ENCODE measurements at regions of chr6 and their contacts with region 1.

Region 1: DNA sequence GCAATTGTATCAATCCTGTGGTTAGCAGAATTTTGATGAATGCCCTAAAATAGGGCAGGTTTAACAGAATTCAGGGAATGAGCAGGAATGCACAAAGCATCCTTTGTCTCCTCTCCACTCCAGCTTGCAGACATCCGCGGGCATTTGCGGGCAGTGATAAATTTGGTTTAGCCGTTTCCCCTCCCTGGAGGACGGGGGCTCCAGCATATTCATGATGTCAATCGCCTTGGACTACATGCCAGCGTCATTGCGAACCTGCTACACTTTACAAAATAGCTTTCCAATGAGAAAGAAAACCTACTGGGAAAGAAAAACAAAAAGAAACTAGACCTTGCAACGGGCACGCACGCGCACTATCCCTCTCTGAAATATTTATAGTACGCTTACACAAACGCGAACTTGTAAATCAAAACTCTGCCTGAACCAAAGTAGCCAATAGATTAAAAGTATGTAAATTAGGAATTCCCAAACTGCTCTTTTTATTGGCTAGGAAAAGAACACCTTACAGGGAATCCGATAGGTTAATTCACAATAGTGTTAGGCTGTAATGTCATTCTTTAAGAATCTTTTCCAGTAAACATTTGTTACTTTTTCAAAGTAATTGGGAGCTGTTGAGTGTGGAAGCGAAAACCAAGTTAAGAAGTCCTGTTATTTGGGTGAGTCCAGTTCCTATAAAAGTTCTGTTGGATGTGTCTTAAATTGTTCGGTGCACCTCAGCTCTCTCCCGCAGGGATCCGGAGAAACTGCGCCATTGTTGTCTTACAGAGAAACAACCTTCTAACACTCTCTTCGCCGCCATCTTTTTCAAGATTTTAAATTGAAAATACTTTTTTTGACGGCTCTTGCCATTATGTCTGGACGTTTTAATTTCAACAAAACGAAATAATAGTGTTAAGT is 136.7 kb downstream of the HFE start:
- DNase-seq: no peak
- ATAC-seq: peak; percentile 69
- H3K4me3 Mint-ChIP-seq: no peak overlapping the region
- H3K27ac Mint-ChIP-seq: no peak overlapping the region
- H3K4me1 Mint-ChIP-seq: peaks cover 42% of the 10 kb centered on the region
- H3K27me3 Mint-ChIP-seq: no peaks in the 10 kb centered on the region
- CTCF ChIP-seq: no peak

Region 2: DNA sequence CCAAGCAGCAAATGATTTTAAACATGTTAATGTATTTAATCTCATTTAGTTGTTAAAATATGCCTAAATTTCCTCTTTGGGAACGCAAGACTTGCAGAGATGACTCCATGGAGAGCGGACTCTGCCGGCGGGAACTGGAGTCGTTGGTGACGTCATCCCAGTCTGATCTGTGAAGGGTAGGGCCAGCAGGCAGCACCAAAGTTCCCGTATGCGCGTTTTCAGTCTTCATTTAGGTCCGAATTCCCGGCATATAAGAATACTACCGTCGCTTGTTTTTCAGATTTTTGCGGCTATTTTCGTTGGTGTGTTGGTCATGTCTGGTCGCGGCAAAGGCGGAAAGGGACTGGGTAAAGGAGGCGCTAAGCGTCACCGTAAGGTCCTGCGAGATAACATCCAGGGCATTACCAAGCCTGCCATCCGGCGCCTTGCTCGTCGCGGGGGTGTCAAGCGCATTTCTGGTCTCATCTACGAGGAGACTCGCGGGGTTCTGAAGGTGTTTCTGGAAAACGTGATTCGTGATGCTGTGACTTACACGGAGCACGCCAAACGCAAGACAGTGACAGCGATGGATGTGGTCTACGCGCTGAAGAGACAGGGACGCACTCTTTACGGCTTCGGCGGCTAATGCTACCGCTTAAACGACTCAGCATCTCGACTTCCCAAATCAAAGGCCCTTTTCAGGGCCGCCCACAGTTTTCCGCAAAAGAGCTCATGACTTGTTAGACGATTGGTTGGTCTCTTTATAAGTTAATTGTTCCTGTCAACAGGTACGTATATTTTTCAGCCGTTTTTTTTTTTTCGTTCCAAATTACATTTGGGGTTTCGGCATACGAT is 19.3 kb before region 1 on chr6:
- CTCF ChIA-PET with region 1: no interaction called
- POLR2A ChIA-PET with region 1: interaction called, 130 read pairs
- DNase-seq: peak; percentile 90
- ATAC-seq: peak; percentile 58
- H3K4me3 Mint-ChIP-seq: no peak overlapping the region
- H3K27ac Mint-ChIP-seq: no peak overlapping the region
- H3K4me1 Mint-ChIP-seq: peaks cover 22% of the 10 kb centered on the region
- H3K27me3 Mint-ChIP-seq: no peaks in the 10 kb centered on the region
- CTCF ChIP-seq: no peak

Region 3: GRCh38 chr6:26240154-26241032 is 16.5 kb after region 1 on chr6:
- CTCF ChIA-PET with region 1: no interaction called
- POLR2A ChIA-PET with region 1: interaction called, 216 read pairs
- DNase-seq: peak; percentile 81
- ATAC-seq: peak; percentile 84
- H3K4me3 Mint-ChIP-seq: peak overlapping the region; percentile 75
- H3K27ac Mint-ChIP-seq: peak overlapping the region; percentile 98
- H3K4me1 Mint-ChIP-seq: peaks cover 48% of the 10 kb centered on the region
- H3K27me3 Mint-ChIP-seq: no peaks in the 10 kb centered on the region; the same call in 1 of the 2 replicates
- CTCF ChIP-seq: no peak